ENCODE measurements at regions of chr1 and their contacts with region 1.

Region 1: GRCh38 chr1:2233997-2234761 is 6.1 kb downstream of the SKI start:
- DNase-seq: peak in 40 of 42 donors; percentile 51 to 91 (median 76)

Region 2: GRCh38 chr1:2194898-2195673 is 39.1 kb before region 1 on chr1:
- intact Hi-C with region 1: loop called (anchors 5 kb)
- DNase-seq: peak; percentile 59 to 92 (median 85)

Region 3: GRCh38 chr1:2300851-2301606 is 66.8 kb after region 1 on chr1:
- intact Hi-C with region 1: loop called (anchors 5 kb)
- DNase-seq: peak in 40 of 42 donors; percentile 29 to 81 (median 62)

Region 4: DNA sequence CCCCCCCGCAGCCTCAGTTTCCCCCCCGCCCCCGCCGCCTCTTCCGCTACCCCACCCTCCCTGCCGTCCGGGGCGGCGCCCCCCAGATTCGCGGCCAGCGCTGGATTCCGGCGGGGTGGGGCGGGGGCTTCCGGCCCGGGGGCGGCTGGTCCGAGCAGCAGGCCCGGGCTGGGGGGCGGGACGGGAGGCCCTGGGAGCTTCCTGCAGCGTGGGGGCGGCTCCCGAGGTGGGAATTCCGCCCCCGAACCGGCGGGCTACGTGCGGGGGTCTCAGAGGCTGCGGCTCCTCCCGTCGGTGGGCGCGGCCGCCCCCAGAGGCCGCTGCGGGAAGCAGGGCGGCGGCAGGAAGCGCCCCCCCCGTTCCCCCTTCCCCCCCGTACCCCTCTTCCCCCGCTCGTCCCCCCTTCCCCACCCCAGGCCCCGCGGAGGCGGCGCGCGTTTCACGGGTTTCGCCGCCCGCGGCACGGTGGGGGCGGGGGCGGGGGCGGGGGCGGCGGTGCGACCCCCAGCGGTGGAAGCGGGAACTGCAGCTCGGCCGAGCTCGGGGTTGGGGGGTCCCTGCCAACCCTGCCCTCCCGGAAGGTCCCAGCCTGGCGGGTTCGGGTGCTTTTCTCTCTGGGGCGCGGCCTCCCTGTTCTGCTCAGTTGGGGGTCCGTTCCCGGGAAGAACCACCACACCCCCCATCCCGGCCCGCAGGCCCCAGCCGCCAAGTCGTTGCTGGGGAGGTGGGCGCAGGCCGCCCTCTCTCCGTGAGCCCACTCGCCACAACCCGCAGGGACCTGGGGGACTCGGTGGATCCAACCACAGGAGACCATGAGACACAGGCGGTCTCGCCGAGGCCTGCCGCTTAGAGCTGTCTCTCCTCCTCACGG is 80.9 kb after region 1 on chr1:
- intact Hi-C with region 1: loop called (anchors 5 kb)
- DNase-seq: peak in 6 of 42 donors; percentile 31 to 68 (median 63)

Measured in head of caudate nucleus (tissue), 42 donors.